GM10248 (cell line): ENCODE measurements at regions of chrX and their contacts with region 1.

Region 1: DNA sequence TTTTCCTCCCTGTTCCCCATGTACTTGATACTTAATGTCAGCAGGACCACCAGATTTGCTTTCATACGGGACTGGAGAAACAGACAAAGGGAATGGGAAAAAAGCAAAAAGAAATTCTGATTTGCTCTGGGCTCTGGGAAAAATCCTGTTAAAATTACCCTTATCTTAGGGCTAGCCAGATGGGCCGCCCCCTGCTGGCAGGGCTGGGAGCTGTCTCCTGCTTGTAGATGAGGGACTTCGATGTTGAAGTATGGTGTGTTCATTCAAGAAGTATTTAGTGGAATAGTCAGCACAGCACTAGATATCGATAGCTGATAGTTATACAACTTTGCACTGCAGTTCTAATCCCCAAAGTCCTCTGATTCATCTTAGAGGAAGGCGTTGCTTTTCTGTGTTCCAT is 45.8 kb downstream of the BCORL1 start:
- DNase-seq: peak; percentile 30
- CTCF ChIP-seq: peak; percentile 67

Region 2: DNA sequence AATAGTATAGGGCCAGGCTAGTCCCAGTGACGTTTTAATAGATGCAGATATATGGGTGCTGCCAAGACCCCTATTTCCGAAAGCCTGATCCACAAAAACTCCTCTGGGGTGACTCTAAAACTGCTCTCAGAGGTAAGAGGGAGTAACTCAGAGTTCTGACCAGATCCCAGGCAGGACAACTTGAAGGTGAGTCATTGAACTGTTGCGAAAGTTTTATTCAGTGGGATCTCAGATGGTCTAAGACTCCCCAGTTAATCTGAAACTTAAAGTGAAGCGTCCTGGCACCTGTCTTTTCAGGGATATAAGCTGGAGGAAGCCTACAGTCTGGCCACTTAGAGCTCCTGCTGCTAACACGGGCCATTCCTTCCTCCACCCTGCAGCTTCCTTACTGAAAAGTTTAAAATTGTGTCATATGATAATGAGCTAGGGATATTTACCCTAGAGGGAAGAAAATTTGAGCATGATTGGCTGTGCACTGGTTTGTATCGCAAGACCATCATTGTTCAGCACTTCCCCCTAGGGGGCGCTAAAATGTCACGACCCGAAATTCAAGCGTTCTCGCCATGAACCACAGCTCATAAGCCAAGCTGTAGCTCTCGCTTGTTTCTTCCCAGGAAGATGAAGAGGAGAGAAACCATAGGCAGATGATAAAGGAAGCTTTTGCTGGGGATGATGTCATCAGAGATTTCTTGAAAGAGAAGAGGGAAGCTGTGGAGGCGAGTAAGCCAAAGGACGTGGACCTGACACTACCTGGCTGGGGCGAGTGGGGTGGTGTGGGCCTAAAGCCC is 102.7 kb before region 1 on chrX:
- CTCF ChIA-PET with region 1: interaction called, 73 read pairs
- POLR2A ChIA-PET with region 1: no interaction called
- DNase-seq: peak; percentile 57
- CTCF ChIP-seq: peak; percentile 53

Region 3: GRCh38 chrX:129931411-129932015 is 96.7 kb before region 1 on chrX:
- CTCF ChIA-PET with region 1: interaction called, 73 read pairs
- POLR2A ChIA-PET with region 1: no interaction called
- DNase-seq: peak; percentile 82
- CTCF ChIP-seq: no peak

Region 4: DNA sequence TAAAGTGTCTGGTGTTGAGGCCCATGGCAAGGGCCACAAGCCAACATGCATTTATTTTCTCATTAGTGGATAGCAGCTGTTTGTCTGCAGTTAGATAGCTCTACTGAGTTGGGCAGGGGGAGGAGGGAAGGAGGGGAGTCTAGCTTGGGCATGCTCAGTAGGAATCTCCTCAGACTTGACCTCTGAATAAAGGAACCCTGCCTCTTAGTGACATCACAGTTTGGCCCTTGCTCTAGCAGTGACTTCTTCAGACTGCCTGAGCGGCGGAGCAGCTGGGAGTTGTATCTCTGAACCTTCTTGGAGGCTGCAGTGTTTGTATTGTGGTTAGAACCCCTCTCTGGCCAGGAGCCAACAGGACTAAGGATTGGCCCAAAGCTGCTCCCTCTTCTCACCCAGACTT is 11.7 kb after region 1 on chrX:
- CTCF ChIA-PET with region 1: interaction called, 31 read pairs
- POLR2A ChIA-PET with region 1: interaction called, 4 read pairs
- DNase-seq: no peak
- CTCF ChIP-seq: no peak